Activated B cell treated with CpG ODN at 0.5 μM for 24 hours (primary cell): ENCODE measurements at regions of chr4 and their contacts with region 1.

Region 1: GRCh38 chr4:40924096-40924792 is 174.5 kb downstream of the NSUN7 start:
- DNase-seq: peak; percentile 54
- ATAC-seq: peak; percentile 88
- H3K4me3 Mint-ChIP-seq: no peak overlapping the region
- H3K27ac Mint-ChIP-seq: no peak overlapping the region
- H3K4me1 Mint-ChIP-seq: no peaks in the 10 kb centered on the region
- H3K27me3 Mint-ChIP-seq: peaks cover 15% of the 10 kb centered on the region
- CTCF ChIP-seq: peak; percentile 61

Region 2: DNA sequence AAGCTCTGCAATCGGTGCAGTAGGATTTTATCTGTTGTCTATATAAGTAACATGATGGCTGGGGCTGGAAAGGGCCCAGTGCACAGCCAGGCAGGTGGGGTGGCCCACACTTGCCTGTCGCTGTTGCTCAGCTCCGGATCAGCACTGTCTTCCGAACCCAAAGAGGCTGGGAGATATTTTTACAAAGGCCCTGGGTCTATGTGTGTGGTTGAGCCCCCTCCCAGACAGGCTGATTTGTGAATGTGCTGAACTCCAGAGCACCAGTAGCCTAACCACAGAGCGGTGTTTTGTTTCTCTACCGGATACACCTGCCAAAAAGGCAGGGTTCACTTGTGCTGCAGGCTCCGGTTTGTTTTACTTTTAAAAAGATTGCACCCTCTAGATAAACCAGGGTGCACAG is 622.6 kb before region 1 on chr4:
- CTCF ChIA-PET with region 1: no interaction called
- POLR2A ChIA-PET with region 1: no interaction called
- intact Hi-C with region 1: no loop called
- DNase-seq: peak; percentile 51
- ATAC-seq: peak; percentile 53
- H3K4me3 Mint-ChIP-seq: peak overlapping the region; percentile 79
- H3K27ac Mint-ChIP-seq: peak overlapping the region; percentile 95
- H3K4me1 Mint-ChIP-seq: peaks cover 88% of the 10 kb centered on the region
- H3K27me3 Mint-ChIP-seq: no peaks in the 10 kb centered on the region
- CTCF ChIP-seq: no peak

Region 3: GRCh38 chr4:40736910-40737309 is 187.3 kb before region 1 on chr4:
- CTCF ChIA-PET with region 1: interaction called, 8 read pairs
- POLR2A ChIA-PET with region 1: no interaction called
- intact Hi-C with region 1: loop called (anchors 1 kb)
- DNase-seq: no peak
- ATAC-seq: no peak
- H3K4me3 Mint-ChIP-seq: no peak overlapping the region
- H3K27ac Mint-ChIP-seq: no peak overlapping the region
- H3K4me1 Mint-ChIP-seq: peaks cover 2% of the 10 kb centered on the region
- H3K27me3 Mint-ChIP-seq: peaks cover 2% of the 10 kb centered on the region
- CTCF ChIP-seq: no peak

Region 4: DNA sequence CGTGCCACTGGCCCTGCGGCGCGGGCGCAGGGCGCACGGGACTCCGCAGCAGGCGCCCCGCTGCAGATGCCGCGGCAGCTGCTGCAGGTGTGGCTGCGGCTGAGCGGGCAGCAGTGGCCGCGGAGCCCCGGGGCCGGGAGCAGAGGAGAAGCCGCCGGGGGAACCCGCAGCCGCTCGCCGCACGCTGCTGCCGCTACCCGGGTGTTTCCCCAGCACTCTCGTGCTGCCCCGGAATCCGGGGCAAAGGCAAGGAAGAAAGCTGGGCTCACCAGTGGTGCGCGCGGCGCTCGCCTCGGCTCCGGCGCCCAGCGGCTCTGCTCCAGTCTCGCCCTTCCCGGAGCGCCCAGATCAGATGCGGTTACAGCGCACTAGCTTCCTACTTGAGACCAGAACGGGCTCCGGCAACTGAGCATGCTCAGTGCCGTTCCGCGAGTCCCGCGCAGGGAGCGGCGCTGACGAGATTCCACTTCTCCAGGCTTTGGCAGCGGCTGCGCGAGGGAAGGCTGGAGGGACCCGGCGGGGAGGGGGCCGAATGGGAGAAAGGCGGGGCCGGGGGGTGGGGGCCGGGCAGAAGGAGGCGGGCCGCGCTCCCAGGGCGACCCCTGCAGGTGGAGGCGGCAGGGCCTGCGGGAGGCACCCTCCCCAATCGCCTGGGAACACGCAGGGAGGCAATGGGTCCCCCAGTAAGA is 290.0 kb after region 1 on chr4 and contains the start of gene APBB2:
- CTCF ChIA-PET with region 1: no interaction called
- POLR2A ChIA-PET with region 1: no interaction called
- intact Hi-C with region 1: loop called (anchors 2 kb)
- DNase-seq: peak; percentile 31
- ATAC-seq: peak; percentile 60
- H3K4me3 Mint-ChIP-seq: peak within 1 kb of the TSS; percentile 77
- H3K27ac Mint-ChIP-seq: no peak within 1 kb of the TSS
- H3K4me1 Mint-ChIP-seq: peaks cover 31% of the 10 kb centered on the region
- H3K27me3 Mint-ChIP-seq: peaks cover 52% of the 10 kb centered on the region
- CTCF ChIP-seq: no peak
- total RNA-seq, gene APBB2: 2.1 and 3.7 TPM in 2 replicates

Region 5: GRCh38 chr4:41661442-41662076 is 737.3 kb after region 1 on chr4:
- CTCF ChIA-PET with region 1: no interaction called
- POLR2A ChIA-PET with region 1: no interaction called
- intact Hi-C with region 1: loop called (anchors 1 kb)
- DNase-seq: no peak
- ATAC-seq: no peak
- H3K4me3 Mint-ChIP-seq: no peak overlapping the region
- H3K27ac Mint-ChIP-seq: no peak overlapping the region
- H3K4me1 Mint-ChIP-seq: no peaks in the 10 kb centered on the region
- H3K27me3 Mint-ChIP-seq: peaks cover 1% of the 10 kb centered on the region
- CTCF ChIP-seq: peak; percentile 75